Activated B cell treated with CpG ODN at 0.5 μM for 24 hours (primary cell): ENCODE measurements at regions of chr5 and their contacts with region 1.

Region 1: DNA sequence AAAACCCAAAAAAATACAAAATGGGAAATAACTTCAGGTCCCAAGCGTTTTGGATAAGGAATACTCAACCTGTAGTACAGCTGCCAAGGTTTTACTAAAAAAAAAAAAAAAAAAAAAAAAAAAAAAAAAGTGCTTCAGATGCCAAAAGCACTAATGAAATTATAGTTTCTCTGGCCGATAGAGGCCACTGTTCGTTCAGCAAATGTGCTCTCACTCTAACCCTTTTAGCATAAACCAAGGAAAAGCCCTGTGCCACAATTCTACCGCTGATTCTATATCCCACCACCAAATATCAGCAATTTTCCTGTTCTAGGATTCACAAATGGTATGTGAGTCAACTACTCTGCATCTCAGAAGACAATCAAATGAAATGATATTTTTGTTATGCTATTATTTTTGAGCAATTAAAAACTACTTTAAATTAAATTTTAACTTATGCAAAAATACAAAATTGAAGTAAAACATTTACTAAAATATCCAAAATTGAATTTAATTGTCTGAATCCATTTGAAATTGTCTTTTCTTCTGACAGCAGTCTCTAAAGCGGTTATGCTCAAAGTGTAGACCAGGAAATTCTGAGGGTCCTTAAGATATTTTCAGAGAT is 79.8 kb downstream of the RICTOR start:
- DNase-seq: no peak
- ATAC-seq: no peak
- H3K4me3 Mint-ChIP-seq: no peak overlapping the region
- H3K27ac Mint-ChIP-seq: no peak overlapping the region
- H3K4me1 Mint-ChIP-seq: peaks cover 4% of the 10 kb centered on the region
- H3K27me3 Mint-ChIP-seq: no peaks in the 10 kb centered on the region
- CTCF ChIP-seq: no peak

Region 2: DNA sequence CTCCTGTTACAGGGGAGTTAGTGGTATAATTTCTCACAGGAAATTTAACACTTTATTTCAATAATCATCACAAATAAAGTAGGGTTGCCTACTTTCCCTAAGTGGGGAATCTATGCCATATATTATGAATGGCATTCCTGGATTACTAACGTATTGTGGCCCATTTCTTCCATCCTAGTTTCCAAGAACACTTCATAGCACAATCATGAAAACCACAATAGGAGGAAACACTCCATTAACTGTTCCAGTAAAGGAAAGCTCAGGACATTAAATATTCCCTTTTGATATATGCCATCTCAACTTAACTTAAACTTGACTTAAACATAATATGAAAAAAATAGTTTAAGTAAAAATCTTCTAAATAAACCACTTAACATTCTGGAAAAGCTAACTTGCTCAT is 1747.4 kb before region 1 on chr5:
- CTCF ChIA-PET with region 1: no interaction called
- POLR2A ChIA-PET with region 1: no interaction called
- intact Hi-C with region 1: no loop called
- DNase-seq: no peak
- ATAC-seq: no peak
- H3K4me3 Mint-ChIP-seq: no peak overlapping the region
- H3K27ac Mint-ChIP-seq: no peak overlapping the region
- H3K4me1 Mint-ChIP-seq: peaks cover 8% of the 10 kb centered on the region
- H3K27me3 Mint-ChIP-seq: no peaks in the 10 kb centered on the region
- CTCF ChIP-seq: no peak

Region 3: DNA sequence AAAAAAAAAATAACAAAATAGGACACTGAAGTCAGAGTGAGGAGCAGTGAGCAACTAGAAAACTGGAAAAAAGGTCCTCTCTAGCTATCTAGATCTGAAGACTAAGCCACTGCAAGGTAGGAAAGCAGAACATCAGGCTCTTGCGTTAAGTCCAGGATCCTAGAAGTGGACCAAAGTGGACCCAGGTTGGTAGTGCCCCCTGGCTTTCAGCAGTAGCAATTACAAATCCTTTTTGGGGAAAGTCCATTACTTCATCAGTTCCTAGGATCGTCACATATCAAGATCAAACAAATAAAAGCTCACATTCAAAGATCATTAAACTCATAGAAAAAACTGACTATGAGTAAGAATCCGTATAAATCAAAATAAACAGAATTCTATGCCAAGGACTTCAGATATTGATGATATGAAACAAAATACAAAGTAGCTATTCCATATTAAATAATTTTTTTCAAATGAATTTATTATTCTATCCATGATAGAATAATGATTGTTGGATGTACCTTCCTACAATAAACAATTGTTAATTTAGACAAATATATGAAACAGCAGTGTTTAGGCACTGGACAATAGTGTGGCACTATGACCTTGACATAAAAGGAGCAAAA is 86.3 kb after region 1 on chr5:
- CTCF ChIA-PET with region 1: interaction called, 14 read pairs
- POLR2A ChIA-PET with region 1: no interaction called
- intact Hi-C with region 1: loop called (anchors 1 kb)
- DNase-seq: no peak
- ATAC-seq: no peak
- H3K4me3 Mint-ChIP-seq: no peak overlapping the region
- H3K27ac Mint-ChIP-seq: no peak overlapping the region
- H3K4me1 Mint-ChIP-seq: peaks cover 24% of the 10 kb centered on the region
- H3K27me3 Mint-ChIP-seq: no peaks in the 10 kb centered on the region
- CTCF ChIP-seq: no peak

Region 4: GRCh38 chr5:39106322-39106721 is 111.9 kb after region 1 on chr5:
- CTCF ChIA-PET with region 1: no interaction called
- POLR2A ChIA-PET with region 1: interaction called, 3 read pairs
- intact Hi-C with region 1: loop called (anchors 1 kb)
- DNase-seq: no peak
- ATAC-seq: no peak
- H3K4me3 Mint-ChIP-seq: no peak overlapping the region
- H3K27ac Mint-ChIP-seq: no peak overlapping the region
- H3K4me1 Mint-ChIP-seq: peaks cover 4% of the 10 kb centered on the region
- H3K27me3 Mint-ChIP-seq: no peaks in the 10 kb centered on the region
- CTCF ChIP-seq: no peak

Region 5: GRCh38 chr5:39283231-39283818 is 288.9 kb after region 1 on chr5:
- CTCF ChIA-PET with region 1: no interaction called
- POLR2A ChIA-PET with region 1: no interaction called
- intact Hi-C with region 1: loop called (anchors 1 kb)
- DNase-seq: no peak
- ATAC-seq: peak; percentile 75
- H3K4me3 Mint-ChIP-seq: no peak overlapping the region
- H3K27ac Mint-ChIP-seq: no peak overlapping the region
- H3K4me1 Mint-ChIP-seq: peaks cover 2% of the 10 kb centered on the region
- H3K27me3 Mint-ChIP-seq: peaks cover 15% of the 10 kb centered on the region
- CTCF ChIP-seq: peak; percentile 38

Region 6: GRCh38 chr5:39547553-39548154 is 553.2 kb after region 1 on chr5:
- CTCF ChIA-PET with region 1: no interaction called
- POLR2A ChIA-PET with region 1: no interaction called
- intact Hi-C with region 1: loop called (anchors 10 kb)
- DNase-seq: no peak
- ATAC-seq: no peak
- H3K4me3 Mint-ChIP-seq: no peak overlapping the region
- H3K27ac Mint-ChIP-seq: no peak overlapping the region
- H3K4me1 Mint-ChIP-seq: peaks cover 1% of the 10 kb centered on the region
- H3K27me3 Mint-ChIP-seq: peaks cover 11% of the 10 kb centered on the region
- CTCF ChIP-seq: no peak